ENCODE measurements at regions of chr15 and their contacts with region 1.

Region 1: DNA sequence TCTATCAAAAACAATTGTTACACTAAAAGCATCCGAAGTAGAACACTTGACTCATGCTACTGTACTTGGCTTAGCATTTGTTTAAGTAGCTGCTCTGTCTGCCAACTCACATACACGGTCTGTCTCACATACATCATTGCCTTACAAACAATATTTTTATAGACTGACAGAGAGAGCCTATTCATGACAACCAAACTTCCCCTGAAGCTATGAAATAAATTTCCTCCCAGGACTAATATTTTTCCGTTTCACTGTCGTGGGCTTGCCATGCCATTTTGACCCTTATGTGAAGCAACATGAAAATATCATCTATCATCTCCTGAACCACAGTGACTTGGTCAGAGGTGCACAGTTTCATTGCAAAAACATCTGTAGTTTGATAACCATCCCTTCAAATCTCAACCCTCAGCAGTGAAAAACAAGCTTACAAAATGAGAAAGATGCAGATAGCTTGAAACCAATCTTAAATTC is 66.5 kb upstream of the PYGO1 start:
- DNase-seq: no peak
- H3K4me3 ChIP-seq: no peak overlapping the region
- H3K27ac ChIP-seq: no peak overlapping the region
- H3K4me1 ChIP-seq: peaks cover 5 to 7% of the 10 kb centered on the region in 2 donors
- H3K27me3 ChIP-seq: no peaks in the 10 kb centered on the region
- CTCF ChIP-seq: no peak
- POLR2A ChIP-seq: no peak

Region 2: DNA sequence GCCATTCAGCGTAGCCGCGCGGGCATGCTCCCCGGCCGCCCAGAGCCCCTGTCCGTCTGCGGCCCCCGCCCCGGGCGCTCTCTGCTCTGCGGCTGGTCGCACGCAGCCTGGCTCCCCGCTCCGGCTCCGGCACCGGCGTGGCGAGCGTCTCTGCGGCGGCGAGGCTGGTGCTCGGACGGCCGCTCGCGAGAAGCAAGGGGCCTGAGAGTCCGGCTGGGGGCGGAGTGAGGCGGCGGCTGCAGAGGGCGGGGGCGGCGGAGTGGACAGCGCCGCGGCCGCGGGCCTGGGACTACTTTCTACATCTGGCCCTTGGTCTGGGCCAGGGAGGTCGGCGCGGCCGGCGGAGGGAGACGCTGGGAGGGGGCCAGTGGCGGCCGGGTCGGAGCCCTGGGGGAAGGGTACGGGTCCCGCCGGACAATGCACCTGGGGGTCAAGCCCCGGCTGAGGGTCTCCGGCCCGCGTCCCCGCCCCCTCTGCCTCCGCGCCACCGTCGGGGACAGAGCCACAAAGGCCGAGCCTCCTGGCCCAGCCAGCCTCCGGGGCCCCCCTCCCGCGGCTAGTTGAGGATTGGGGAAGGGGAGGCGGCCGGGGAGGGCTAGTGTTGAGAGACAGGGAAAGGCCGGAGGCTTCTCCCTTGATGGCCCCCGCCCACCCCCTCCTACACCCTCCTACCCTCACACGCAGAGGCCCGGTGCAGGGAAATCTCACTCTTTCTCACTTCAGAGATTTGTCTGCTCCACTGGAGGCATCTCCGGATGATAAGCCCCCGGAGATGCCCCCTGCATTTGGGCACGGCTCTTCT is 88.5 kb after region 1 on chr15 and contains the start of gene PRTG:
- intact Hi-C with region 1: loop called (anchors 10 kb)
- DNase-seq: peak; percentile 90 to 91
- H3K4me3 ChIP-seq: peak within 1 kb of the TSS; percentile 69 to 97 (median 75)
- H3K27ac ChIP-seq: peak within 1 kb of the TSS; percentile 79 to 92 (median 87)
- H3K4me1 ChIP-seq: peaks cover 14 to 22% of the 10 kb centered on the region in 2 donors
- H3K27me3 ChIP-seq: no peaks in the 10 kb centered on the region
- CTCF ChIP-seq: no peak
- POLR2A ChIP-seq: peak; percentile 39 to 84
- total RNA-seq, gene PRTG: 40.3 to 146 (median 89.0) TPM